ENCODE measurements at regions of chr6 and their contacts with region 1.

Region 1: DNA sequence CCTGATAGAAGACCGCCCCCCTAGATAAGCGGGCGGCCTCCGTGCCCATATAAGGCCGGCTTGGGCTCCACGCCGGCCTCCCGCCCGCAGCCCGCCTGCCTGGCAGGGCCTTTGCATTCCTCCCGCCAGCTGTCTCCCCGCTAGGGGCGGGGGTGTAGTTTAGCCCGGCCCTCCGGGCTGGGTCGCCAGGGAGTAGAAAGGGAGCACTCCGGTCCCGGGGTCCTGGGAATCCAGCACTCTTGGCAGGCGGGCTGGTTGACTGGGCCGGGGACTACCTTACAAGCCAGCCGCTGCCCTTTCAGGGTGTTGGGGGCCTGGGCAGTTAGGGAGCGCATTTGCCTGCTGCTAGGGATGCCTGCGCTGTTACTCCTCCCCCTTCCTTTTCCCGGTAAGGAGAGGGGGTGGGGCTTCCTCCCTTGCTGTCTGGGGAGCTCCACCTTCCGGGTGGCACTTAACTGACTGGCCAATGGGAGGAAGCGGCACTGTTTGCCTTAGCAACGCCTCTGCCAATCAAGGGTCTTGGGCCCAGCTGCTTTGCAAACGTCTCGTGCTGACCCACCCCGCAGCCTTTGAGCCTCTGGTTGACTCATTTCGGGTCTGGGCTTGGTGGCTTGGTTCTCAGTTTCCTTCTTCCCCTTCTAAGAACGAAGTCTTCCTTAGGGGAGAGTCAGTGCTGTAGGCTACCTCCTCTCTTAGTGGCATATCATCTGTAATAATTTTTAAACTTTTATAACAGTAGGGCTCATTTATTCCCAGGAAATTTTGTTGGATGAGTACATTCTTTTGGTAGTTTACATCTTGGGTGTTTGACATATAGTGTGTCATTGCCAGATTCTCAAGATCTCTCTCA is 3.4 kb downstream of the SRF start:
- DNase-seq: peak; percentile 73 to 99 (median 91)
- ATAC-seq: peak; percentile 51
- H3K4me3 ChIP-seq: peak overlapping the region; percentile 83
- H3K4me3 Mint-ChIP-seq: peak overlapping the region; percentile 89
- H3K27ac ChIP-seq: peak overlapping the region; percentile 78 to 83
- H3K27ac Mint-ChIP-seq: peak overlapping the region; percentile 88
- H3K4me1 ChIP-seq: peaks cover 52% of the 10 kb centered on the region
- H3K4me1 Mint-ChIP-seq: peaks cover 42% of the 10 kb centered on the region
- H3K27me3 ChIP-seq: no peaks in the 10 kb centered on the region
- H3K27me3 Mint-ChIP-seq: no peaks in the 10 kb centered on the region
- CTCF ChIP-seq: no peak

Region 2: GRCh38 chr6:42050266-42051032 is 1124.0 kb before region 1 on chr6 and contains the start of gene TAF8:
- CTCF ChIA-PET with region 1: no interaction called
- POLR2A ChIA-PET with region 1: no interaction called
- intact Hi-C with region 1: loop called in 1 of 2 experiments (anchors 5 kb)
- DNase-seq: peak; percentile 78 to 95 (median 84)
- ATAC-seq: peak; percentile 53
- H3K4me3 ChIP-seq: peak within 1 kb of the TSS; percentile 85
- H3K4me3 Mint-ChIP-seq: peak within 1 kb of the TSS; percentile 96
- H3K27ac ChIP-seq: peak within 1 kb of the TSS; percentile 85 to 89
- H3K27ac Mint-ChIP-seq: peak within 1 kb of the TSS; percentile 89
- H3K4me1 ChIP-seq: peaks cover 61% of the 10 kb centered on the region
- H3K4me1 Mint-ChIP-seq: peaks cover 72% of the 10 kb centered on the region
- H3K27me3 ChIP-seq: no peaks in the 10 kb centered on the region
- H3K27me3 Mint-ChIP-seq: no peaks in the 10 kb centered on the region
- CTCF ChIP-seq: no peak
- total RNA-seq, gene TAF8: 30.1 to 34.7 TPM

Region 3: GRCh38 chr6:43059168-43060033 is 115.1 kb before region 1 on chr6 and contains the starts of genes KLC4 and MRPL2:
- CTCF ChIA-PET with region 1: no interaction called
- POLR2A ChIA-PET with region 1: interaction called, 6 read pairs
- intact Hi-C with region 1: loop called in 1 of 2 experiments (anchors 2 kb)
- DNase-seq: peak; percentile 94 to 99 (median 97)
- ATAC-seq: peak; percentile 97
- H3K4me3 ChIP-seq: peak within 1 kb of the TSS; percentile 89
- H3K4me3 Mint-ChIP-seq: peak within 1 kb of the TSS; percentile 91
- H3K27ac ChIP-seq: peak within 1 kb of the TSS; percentile 85 to 95
- H3K27ac Mint-ChIP-seq: peak within 1 kb of the TSS; percentile 96
- H3K4me1 ChIP-seq: peaks cover 29% of the 10 kb centered on the region
- H3K4me1 Mint-ChIP-seq: peaks cover 50% of the 10 kb centered on the region
- H3K27me3 ChIP-seq: no peaks in the 10 kb centered on the region
- H3K27me3 Mint-ChIP-seq: no peaks in the 10 kb centered on the region
- CTCF ChIP-seq: no peak
- total RNA-seq, gene KLC4: 39.6 to 40.8 TPM
- total RNA-seq, gene MRPL2: 42.8 to 48.0 TPM

Region 4: GRCh38 chr6:43228951-43229802 is 54.7 kb after region 1 on chr6 and contains the start of gene DNPH1:
- CTCF ChIA-PET with region 1: interaction called, 6 read pairs
- POLR2A ChIA-PET with region 1: interaction called, 12 read pairs
- intact Hi-C with region 1: loop called (anchors 2 to 5 kb)
- DNase-seq: peak; percentile 60 to 91 (median 78)
- ATAC-seq: peak; percentile 67
- H3K4me3 ChIP-seq: peak within 1 kb of the TSS; percentile 68
- H3K4me3 Mint-ChIP-seq: peak within 1 kb of the TSS; percentile 93
- H3K27ac ChIP-seq: peak within 1 kb of the TSS in 1 of 2 donors; percentile 56
- H3K27ac Mint-ChIP-seq: peak within 1 kb of the TSS; percentile 88
- H3K4me1 ChIP-seq: peaks cover 47% of the 10 kb centered on the region
- H3K4me1 Mint-ChIP-seq: peaks cover 44% of the 10 kb centered on the region
- H3K27me3 ChIP-seq: no peaks in the 10 kb centered on the region
- H3K27me3 Mint-ChIP-seq: peaks cover 6% of the 10 kb centered on the region
- CTCF ChIP-seq: peak; percentile 90
- total RNA-seq, gene DNPH1: 27.3 to 30.6 TPM

Region 5: GRCh38 chr6:43347021-43347420 is 172.5 kb after region 1 on chr6:
- CTCF ChIA-PET with region 1: no interaction called
- POLR2A ChIA-PET with region 1: no interaction called
- intact Hi-C with region 1: no loop called
- DNase-seq: no peak
- ATAC-seq: no peak
- H3K4me3 ChIP-seq: no peak overlapping the region
- H3K4me3 Mint-ChIP-seq: no peak overlapping the region
- H3K27ac ChIP-seq: no peak overlapping the region
- H3K27ac Mint-ChIP-seq: no peak overlapping the region
- H3K4me1 ChIP-seq: no peaks in the 10 kb centered on the region
- H3K4me1 Mint-ChIP-seq: no peaks in the 10 kb centered on the region
- H3K27me3 ChIP-seq: no peaks in the 10 kb centered on the region
- H3K27me3 Mint-ChIP-seq: no peaks in the 10 kb centered on the region
- CTCF ChIP-seq: no peak

Region 6: GRCh38 chr6:43369174-43370022 is 194.9 kb after region 1 on chr6 and contains the start of gene ZNF318:
- CTCF ChIA-PET with region 1: no interaction called
- POLR2A ChIA-PET with region 1: interaction called, 4 read pairs
- intact Hi-C with region 1: loop called in 1 of 2 experiments (anchors 2 kb)
- DNase-seq: peak; percentile 88 to 99 (median 92)
- ATAC-seq: peak; percentile 95
- H3K4me3 ChIP-seq: peak within 1 kb of the TSS; percentile 77
- H3K4me3 Mint-ChIP-seq: peak within 1 kb of the TSS; percentile 96
- H3K27ac ChIP-seq: peak within 1 kb of the TSS; percentile 76 to 85
- H3K27ac Mint-ChIP-seq: peak within 1 kb of the TSS; percentile 95
- H3K4me1 ChIP-seq: peaks cover 38% of the 10 kb centered on the region
- H3K4me1 Mint-ChIP-seq: peaks cover 49% of the 10 kb centered on the region
- H3K27me3 ChIP-seq: no peaks in the 10 kb centered on the region
- H3K27me3 Mint-ChIP-seq: no peaks in the 10 kb centered on the region
- CTCF ChIP-seq: no peak
- total RNA-seq, gene ZNF318: 20.4 TPM